ENCODE measurements at regions of chr1 and their contacts with region 1.

Region 1: GRCh38 chr1:220733090-220733601 is 15.0 kb upstream of the MTARC2 start:
- DNase-seq: peak; percentile 74 to 92
- ATAC-seq: peak; percentile 93 to 98 (median 96)
- H3K4me3 ChIP-seq: peak overlapping the region in 9 of 10 donors; percentile 2 to 44 (median 35)
- H3K27ac ChIP-seq: peak overlapping the region; percentile 7 to 93 (median 78)
- H3K4me1 ChIP-seq: peaks cover 0 to 25% (median 18%) of the 10 kb centered on the region in 9 donors
- H3K27me3 ChIP-seq: no peaks in the 10 kb centered on the region
- CTCF ChIP-seq: peak; percentile 81 to 94 (median 90)

Region 2: GRCh38 chr1:220521778-220522177 is 211.4 kb before region 1 on chr1:
- intact Hi-C with region 1: no loop called
- DNase-seq: no peak
- ATAC-seq: no peak
- H3K4me3 ChIP-seq: no peak overlapping the region
- H3K27ac ChIP-seq: no peak overlapping the region
- H3K4me1 ChIP-seq: peaks cover 0 to 5% (median 0%) of the 10 kb centered on the region in 9 donors
- H3K27me3 ChIP-seq: peaks cover 0 to 34% (median 6%) of the 10 kb centered on the region in 7 donors
- CTCF ChIP-seq: no peak

Region 3: GRCh38 chr1:220655509-220655908 is 77.6 kb before region 1 on chr1:
- intact Hi-C with region 1: no loop called
- DNase-seq: no peak
- ATAC-seq: no peak
- H3K4me3 ChIP-seq: no peak overlapping the region
- H3K27ac ChIP-seq: no peak overlapping the region
- H3K4me1 ChIP-seq: peaks cover 0 to 17% (median 4%) of the 10 kb centered on the region in 9 donors
- H3K27me3 ChIP-seq: no peaks in the 10 kb centered on the region
- CTCF ChIP-seq: no peak

Region 4: DNA sequence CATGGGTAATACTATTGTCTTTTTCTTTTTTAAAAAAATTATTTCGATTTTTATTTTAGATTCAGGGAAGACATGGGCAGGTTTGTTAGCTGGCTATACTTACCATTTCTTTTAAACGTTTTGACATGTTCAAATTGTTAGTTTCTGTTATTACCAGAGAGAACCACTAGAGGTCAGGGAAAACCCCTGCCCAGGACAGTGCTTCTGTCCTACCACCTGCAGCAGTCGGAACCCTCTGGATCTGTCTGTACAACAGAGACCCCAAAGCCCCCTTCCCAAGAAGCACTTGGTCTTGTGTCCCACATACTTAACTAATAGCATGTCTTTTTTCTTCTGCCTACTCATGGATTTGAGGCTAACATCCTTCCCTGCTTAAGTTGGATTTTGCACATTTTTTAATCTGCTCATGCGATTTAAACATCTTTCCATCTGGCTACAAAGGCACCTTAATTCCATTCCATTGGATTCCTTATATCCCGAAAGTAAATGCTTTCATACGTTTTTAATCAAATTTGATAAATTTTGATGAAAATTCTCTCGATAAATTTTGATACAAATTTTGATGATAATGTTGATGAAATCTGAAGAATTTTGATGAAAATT is 53.0 kb before region 1 on chr1:
- intact Hi-C with region 1: loop called in 4 of 10 experiments (anchors 1 to 5 kb)
- DNase-seq: no peak
- ATAC-seq: peak in 7 of 8 donors; percentile 49 to 87 (median 73)
- H3K4me3 ChIP-seq: no peak overlapping the region
- H3K27ac ChIP-seq: no peak overlapping the region
- H3K4me1 ChIP-seq: peaks cover 0 to 6% (median 0%) of the 10 kb centered on the region in 9 donors
- H3K27me3 ChIP-seq: no peaks in the 10 kb centered on the region
- CTCF ChIP-seq: peak; percentile 65 to 88 (median 78)

Region 5: GRCh38 chr1:221256773-221257477 is 523.8 kb after region 1 on chr1:
- intact Hi-C with region 1: no loop called
- DNase-seq: no peak
- ATAC-seq: peak in 2 of 8 donors; percentile 58 to 63
- H3K4me3 ChIP-seq: no peak overlapping the region
- H3K27ac ChIP-seq: no peak overlapping the region
- H3K4me1 ChIP-seq: no peaks in the 10 kb centered on the region
- H3K27me3 ChIP-seq: no peaks in the 10 kb centered on the region
- CTCF ChIP-seq: no peak